Naive thymus-derived CD4-positive, alpha-beta T cell (primary cell): ENCODE measurements at regions of chr11 and their contacts with region 1.

Region 1: GRCh38 chr11:17730608-17731462 is 3.7 kb upstream of the KCNC1 start:
- DNase-seq: peak in 8 of 9 donors; percentile 4 to 72 (median 32)
- ATAC-seq: peak; percentile 74
- H3K4me3 ChIP-seq: no peak overlapping the region
- H3K4me3 Mint-ChIP-seq: no peak overlapping the region
- H3K27ac ChIP-seq: no peak overlapping the region
- H3K27ac Mint-ChIP-seq: no peak overlapping the region
- H3K4me1 ChIP-seq: no peaks in the 10 kb centered on the region
- H3K4me1 Mint-ChIP-seq: peaks cover 0 to 10% (median 7%) of the 10 kb centered on the region in 7 donors
- H3K27me3 ChIP-seq: no peaks in the 10 kb centered on the region
- H3K27me3 Mint-ChIP-seq: peaks cover 49 to 63% (median 58%) of the 10 kb centered on the region in 5 donors

Region 2: DNA sequence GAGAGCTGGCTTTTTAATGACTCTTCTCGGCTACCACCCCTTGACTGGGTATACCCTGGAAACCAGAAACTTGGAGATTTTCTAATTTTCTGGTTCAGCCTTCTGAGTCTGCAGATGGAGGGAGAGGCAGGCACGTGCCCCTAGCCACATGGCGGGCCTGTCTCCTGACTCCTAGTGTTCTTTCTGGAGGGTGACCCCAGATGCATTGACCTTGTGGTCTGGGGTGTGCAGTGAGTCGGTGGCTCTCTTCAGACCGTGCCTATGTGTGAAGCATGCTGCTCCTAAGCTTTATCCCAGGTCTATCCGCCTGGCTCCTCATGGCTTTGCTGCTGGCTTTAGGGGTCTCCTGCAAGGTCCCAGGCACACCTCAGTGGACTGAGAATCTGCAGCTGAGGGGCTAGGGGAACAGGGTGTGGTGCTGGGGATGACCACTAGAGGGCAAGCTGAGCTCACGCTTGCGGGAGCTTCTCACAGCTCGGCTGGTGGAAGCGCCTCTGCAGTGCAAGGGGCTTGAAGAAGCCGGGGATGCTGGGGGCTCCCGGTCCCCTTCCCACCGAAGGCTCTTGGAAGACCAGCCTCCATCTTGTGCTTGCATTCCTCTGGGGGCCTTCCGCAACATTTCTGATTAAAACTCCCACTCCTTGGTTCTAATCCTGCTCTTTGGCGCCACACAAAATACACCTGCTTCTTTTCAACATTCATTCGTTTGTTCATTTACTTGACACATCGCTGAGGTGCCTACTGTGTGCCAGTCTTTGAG is 132.0 kb before region 1 on chr11:
- CTCF ChIA-PET with region 1: no interaction called
- POLR2A ChIA-PET with region 1: no interaction called
- intact Hi-C with region 1: loop called in 1 of 2 experiments (anchors 2 kb)
- DNase-seq: peak; percentile 16 to 72 (median 42)
- ATAC-seq: peak; percentile 79
- H3K4me3 ChIP-seq: no peak overlapping the region
- H3K4me3 Mint-ChIP-seq: no peak overlapping the region
- H3K27ac ChIP-seq: no peak overlapping the region
- H3K27ac Mint-ChIP-seq: no peak overlapping the region
- H3K4me1 ChIP-seq: no peaks in the 10 kb centered on the region
- H3K4me1 Mint-ChIP-seq: peaks cover 0 to 6% (median 0%) of the 10 kb centered on the region in 7 donors
- H3K27me3 ChIP-seq: no peaks in the 10 kb centered on the region
- H3K27me3 Mint-ChIP-seq: peaks cover 0 to 13% (median 0%) of the 10 kb centered on the region in 5 donors

Region 3: DNA sequence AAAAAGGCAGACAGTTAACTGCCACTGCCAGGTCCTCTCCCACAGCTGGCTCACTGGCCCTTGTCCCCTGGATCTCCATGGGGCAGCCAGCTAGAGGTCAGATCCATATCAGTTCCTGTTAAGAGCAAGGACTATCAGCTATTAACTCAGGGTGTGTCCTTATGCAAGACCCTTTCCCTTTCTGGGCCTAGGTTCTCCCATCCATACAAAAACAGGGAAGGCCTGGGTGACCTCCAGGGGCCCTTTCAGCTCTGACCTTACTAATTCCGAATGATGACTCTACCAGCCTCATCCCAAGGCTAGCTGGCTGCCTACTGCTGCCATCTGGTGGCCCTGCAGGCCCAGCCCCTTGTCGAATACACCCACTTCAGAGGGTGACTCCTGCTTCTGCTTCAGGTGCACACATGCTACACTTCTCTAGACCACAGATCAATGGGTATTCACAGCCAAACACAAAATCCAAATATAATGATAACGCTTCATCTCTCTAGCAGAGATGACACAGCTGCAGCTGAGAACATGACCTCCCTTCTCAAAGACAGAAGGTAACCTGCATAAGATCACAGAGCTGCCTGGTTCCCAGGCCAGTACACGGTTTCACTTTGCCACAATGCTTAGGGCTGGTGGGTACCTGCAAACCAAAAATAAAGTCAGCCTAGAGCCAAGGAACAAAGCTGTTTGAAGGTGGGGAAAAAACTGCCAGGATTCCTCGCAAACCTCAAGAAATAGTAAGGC is 247.9 kb after region 1 on chr11:
- CTCF ChIA-PET with region 1: interaction called, 6 read pairs
- POLR2A ChIA-PET with region 1: no interaction called
- intact Hi-C with region 1: loop called in 1 of 2 experiments (anchors 1 kb)
- DNase-seq: peak in 1 of 9 donors; percentile 27
- ATAC-seq: no peak
- H3K4me3 ChIP-seq: no peak overlapping the region
- H3K4me3 Mint-ChIP-seq: no peak overlapping the region
- H3K27ac ChIP-seq: no peak overlapping the region
- H3K27ac Mint-ChIP-seq: peak overlapping the region in 1 of 9 donors; percentile 19
- H3K4me1 ChIP-seq: no peaks in the 10 kb centered on the region
- H3K4me1 Mint-ChIP-seq: peaks cover 0 to 9% (median 5%) of the 10 kb centered on the region in 7 donors
- H3K27me3 ChIP-seq: no peaks in the 10 kb centered on the region
- H3K27me3 Mint-ChIP-seq: no peaks in the 10 kb centered on the region

Region 4: GRCh38 chr11:18105802-18106574 is 375.2 kb after region 1 on chr11 and contains the start of gene SAAL1:
- CTCF ChIA-PET with region 1: no interaction called
- POLR2A ChIA-PET with region 1: no interaction called
- intact Hi-C with region 1: loop called in 1 of 2 experiments (anchors 5 kb)
- DNase-seq: peak; percentile 80 to 95 (median 84)
- ATAC-seq: peak; percentile 99
- H3K4me3 ChIP-seq: peak within 1 kb of the TSS; percentile 93
- H3K4me3 Mint-ChIP-seq: peak within 1 kb of the TSS; percentile 84 to 95 (median 93)
- H3K27ac ChIP-seq: peak within 1 kb of the TSS; percentile 78
- H3K27ac Mint-ChIP-seq: peak within 1 kb of the TSS; percentile 77 to 93 (median 90)
- H3K4me1 ChIP-seq: peaks cover 14 to 15% of the 10 kb centered on the region in 2 donors
- H3K4me1 Mint-ChIP-seq: peaks cover 21 to 54% (median 42%) of the 10 kb centered on the region in 7 donors
- H3K27me3 ChIP-seq: no peaks in the 10 kb centered on the region
- H3K27me3 Mint-ChIP-seq: peaks cover 0 to 15% (median 0%) of the 10 kb centered on the region in 5 donors
- total RNA-seq, gene SAAL1: 16.0 to 25.3 (median 19.3) TPM

Region 5: GRCh38 chr11:18280438-18281045 is 549.7 kb after region 1 on chr11:
- CTCF ChIA-PET with region 1: no interaction called
- POLR2A ChIA-PET with region 1: no interaction called
- intact Hi-C with region 1: no loop called
- DNase-seq: no peak
- ATAC-seq: peak; percentile 53
- H3K4me3 ChIP-seq: no peak overlapping the region
- H3K4me3 Mint-ChIP-seq: peak overlapping the region in 1 of 10 donors; percentile 61
- H3K27ac ChIP-seq: no peak overlapping the region
- H3K27ac Mint-ChIP-seq: peak overlapping the region in 4 of 9 donors; percentile 58 to 85 (median 70)
- H3K4me1 ChIP-seq: no peaks in the 10 kb centered on the region
- H3K4me1 Mint-ChIP-seq: peaks cover 0 to 20% (median 4%) of the 10 kb centered on the region in 7 donors
- H3K27me3 ChIP-seq: no peaks in the 10 kb centered on the region
- H3K27me3 Mint-ChIP-seq: no peaks in the 10 kb centered on the region